GM10248 (cell line): ENCODE measurements at regions of chr5 and their contacts with region 1.

Region 1: GRCh38 chr5:74738406-74738805 is 28.5 kb downstream of the GFM2 start:
- DNase-seq: no peak
- CTCF ChIP-seq: no peak

Region 2: GRCh38 chr5:74725331-74725730 is 13.1 kb before region 1 on chr5:
- CTCF ChIA-PET with region 1: interaction called, 12 read pairs
- POLR2A ChIA-PET with region 1: no interaction called
- DNase-seq: no peak
- CTCF ChIP-seq: no peak

Region 3: DNA sequence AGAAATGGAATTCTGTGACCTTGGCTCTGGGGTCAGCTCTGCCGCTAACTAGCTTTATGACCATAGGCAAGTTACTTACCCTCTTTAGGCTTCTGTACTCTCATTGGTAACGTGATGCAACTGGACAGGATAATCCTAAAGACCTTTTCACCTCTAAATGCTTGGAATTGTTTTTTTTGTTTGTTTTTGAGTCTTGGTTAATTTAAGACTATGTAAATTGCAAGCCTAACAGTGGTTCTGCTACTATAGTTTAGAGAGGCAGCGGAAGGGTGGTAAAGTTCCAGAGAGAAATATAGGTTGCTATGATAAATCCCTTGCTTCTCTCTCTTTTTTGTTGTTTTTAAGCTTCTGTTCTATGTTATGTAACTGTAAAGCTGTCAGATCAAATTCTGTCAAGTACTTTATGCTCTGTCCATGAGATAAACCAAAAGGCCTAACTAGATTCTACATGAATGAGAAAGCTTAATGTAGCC is 110.2 kb after region 1 on chr5:
- CTCF ChIA-PET with region 1: no interaction called
- POLR2A ChIA-PET with region 1: no interaction called
- DNase-seq: no peak
- CTCF ChIP-seq: no peak